Right ventricle myocardium inferior (tissue), 1 donor: ENCODE measurements at regions of chr1 and their contacts with region 1.

Region 1: GRCh38 chr1:230978491-230979388 is at the starts of genes ARV1 and TTC13:
- DNase-seq: peak; percentile 100
- ATAC-seq: peak; percentile 100
- total RNA-seq, gene ARV1: 17.3 TPM
- total RNA-seq, gene TTC13: 6.7 TPM

Region 2: GRCh38 chr1:230476622-230477003 is 502.1 kb before region 1 on chr1:
- intact Hi-C with region 1: no loop called
- DNase-seq: no peak
- ATAC-seq: no peak

Region 3: DNA sequence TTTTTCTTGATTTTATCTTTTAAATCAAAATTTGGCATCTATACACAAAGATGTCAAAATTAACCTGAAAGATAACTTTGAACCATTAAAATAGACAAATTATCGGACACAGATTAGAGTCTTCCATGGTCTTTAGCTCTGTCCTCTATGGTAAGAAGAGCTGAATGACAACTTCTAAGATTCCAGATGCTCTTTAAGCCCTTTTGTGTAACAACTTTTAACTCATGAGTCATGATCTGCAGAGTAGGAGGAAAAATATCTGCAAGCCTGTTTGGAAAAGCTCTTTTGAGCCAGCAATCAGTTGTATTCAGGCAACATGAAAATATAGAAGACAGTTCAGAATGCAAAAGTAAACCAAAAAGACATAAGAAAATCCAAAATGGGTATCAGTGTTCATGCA is 37.9 kb before region 1 on chr1:
- intact Hi-C with region 1: no loop called
- DNase-seq: no peak
- ATAC-seq: no peak

Region 4: GRCh38 chr1:231040019-231040799 is 61.5 kb after region 1 on chr1 and contains the start of gene FAM89A:
- intact Hi-C with region 1: loop called (anchors 5 kb)
- DNase-seq: no peak
- ATAC-seq: peak; percentile 69
- total RNA-seq, gene FAM89A: 8.9 TPM